A673 (cell line): ENCODE measurements at regions of chr7 and their contacts with region 1.

Region 1: DNA sequence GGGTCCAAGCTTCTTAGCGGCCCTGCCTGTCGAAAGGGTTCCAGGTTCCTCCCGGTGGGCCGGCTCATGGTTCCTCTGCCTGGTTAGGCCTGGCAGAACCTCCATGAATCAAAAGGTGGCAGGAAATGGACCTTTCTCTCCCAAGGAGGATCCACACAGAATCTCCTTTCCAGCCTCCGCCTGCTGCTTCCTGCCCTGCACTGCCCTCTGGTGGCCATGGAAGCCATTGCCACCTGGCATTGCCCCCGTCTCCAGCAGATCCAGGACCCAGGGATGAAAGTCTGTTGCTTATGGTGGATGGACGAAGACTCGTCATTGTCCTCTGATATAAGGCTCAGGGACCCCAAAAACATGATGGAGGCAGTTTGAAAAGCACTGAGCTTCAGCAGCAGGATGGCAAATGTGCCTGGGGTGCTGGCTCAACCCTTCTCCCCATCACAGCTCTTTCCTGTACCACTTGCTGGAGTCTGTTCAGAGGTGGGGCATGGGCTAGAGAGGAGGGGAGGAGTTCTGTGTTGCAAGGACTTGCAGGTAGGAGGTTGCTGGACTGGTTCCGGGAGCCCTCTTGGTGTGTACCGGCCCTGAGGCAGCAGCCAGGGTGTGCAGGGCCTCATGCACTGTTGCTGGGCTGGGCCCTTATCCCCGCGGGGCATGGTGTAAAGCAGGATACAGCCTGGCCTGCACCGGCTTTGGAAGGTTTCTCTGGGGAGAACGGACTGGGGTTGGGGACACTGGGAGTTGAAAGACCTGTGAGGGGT is 11.3 kb upstream of the INMT start:
- DNase-seq: peak; percentile 73
- H3K4me3 ChIP-seq: no peak overlapping the region
- H3K27ac ChIP-seq: no peak overlapping the region
- H3K4me1 ChIP-seq: no peaks in the 10 kb centered on the region
- H3K27me3 ChIP-seq: no peaks in the 10 kb centered on the region
- CTCF ChIP-seq: peak; percentile 97

Region 2: DNA sequence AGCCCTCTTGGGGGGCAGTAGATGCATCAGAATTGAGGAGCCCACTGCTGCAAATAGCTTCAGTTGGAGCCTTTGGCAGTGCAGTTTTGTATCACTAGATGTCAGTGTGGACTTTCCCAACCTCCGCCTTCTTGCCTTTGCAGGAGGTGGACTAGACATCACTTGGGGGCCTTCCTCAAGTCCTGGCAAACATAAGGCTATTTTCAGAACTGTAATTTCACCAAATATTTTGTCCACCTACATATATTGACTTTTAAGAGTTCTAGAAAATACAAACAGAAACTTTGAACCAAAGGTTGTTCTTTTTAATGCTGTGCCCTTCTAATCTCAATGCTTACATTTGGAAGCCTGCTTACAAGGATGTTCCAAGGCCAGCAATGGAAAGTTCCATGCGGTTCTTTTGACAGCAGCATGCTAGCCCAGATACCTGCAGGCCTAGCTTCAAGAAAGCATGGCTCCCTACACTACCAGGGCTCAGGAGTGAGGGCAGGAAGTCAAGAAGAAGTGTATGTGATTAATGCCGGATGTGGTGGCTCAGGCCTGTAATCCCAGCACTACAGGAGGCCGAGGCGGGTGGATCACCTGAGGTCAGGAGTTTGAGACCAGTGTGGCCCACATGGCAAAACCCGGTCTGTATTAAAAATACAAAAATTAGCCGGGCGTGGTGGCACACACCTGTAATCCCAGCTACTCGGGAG is 464.3 kb before region 1 on chr7:
- CTCF ChIA-PET with region 1: interaction called, 5 read pairs
- POLR2A ChIA-PET with region 1: no interaction called
- intact Hi-C with region 1: loop called (anchors 2 kb)
- DNase-seq: peak; percentile 71
- H3K4me3 ChIP-seq: no peak overlapping the region
- H3K27ac ChIP-seq: no peak overlapping the region
- H3K4me1 ChIP-seq: no peaks in the 10 kb centered on the region
- H3K27me3 ChIP-seq: no peaks in the 10 kb centered on the region
- CTCF ChIP-seq: peak; percentile 79

Region 3: GRCh38 chr7:30548762-30549344 is 191.8 kb before region 1 on chr7:
- CTCF ChIA-PET with region 1: no interaction called
- POLR2A ChIA-PET with region 1: no interaction called
- intact Hi-C with region 1: loop called (anchors 5 kb)
- DNase-seq: peak; percentile 85
- H3K4me3 ChIP-seq: no peak overlapping the region
- H3K27ac ChIP-seq: no peak overlapping the region
- H3K4me1 ChIP-seq: peaks cover 26% of the 10 kb centered on the region
- H3K27me3 ChIP-seq: no peaks in the 10 kb centered on the region
- CTCF ChIP-seq: peak; percentile 82

Region 4: DNA sequence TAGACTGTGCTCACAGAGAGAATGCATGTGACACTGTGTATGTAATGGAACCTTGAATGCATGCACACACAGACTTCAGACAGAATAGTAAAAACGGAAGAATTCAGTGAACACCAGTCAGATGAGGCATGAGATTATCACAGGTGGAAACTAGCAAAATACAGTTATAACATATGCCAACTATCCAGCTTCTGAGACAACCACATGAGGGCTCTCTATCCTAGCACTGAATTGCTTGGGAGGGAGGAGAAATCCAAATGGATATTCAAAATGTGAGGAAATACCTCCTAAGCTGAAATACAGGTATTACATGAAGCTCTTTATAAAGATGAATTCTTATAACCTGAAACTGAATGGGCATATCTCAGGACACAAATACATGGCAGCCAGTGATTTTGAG is 115.3 kb before region 1 on chr7:
- CTCF ChIA-PET with region 1: no interaction called
- POLR2A ChIA-PET with region 1: no interaction called
- intact Hi-C with region 1: loop called (anchors 10 kb)
- DNase-seq: no peak
- H3K4me3 ChIP-seq: no peak overlapping the region
- H3K27ac ChIP-seq: no peak overlapping the region
- H3K4me1 ChIP-seq: no peaks in the 10 kb centered on the region
- H3K27me3 ChIP-seq: no peaks in the 10 kb centered on the region
- CTCF ChIP-seq: no peak

Region 5: GRCh38 chr7:30977896-30978564 is 237.4 kb after region 1 on chr7:
- CTCF ChIA-PET with region 1: no interaction called
- POLR2A ChIA-PET with region 1: no interaction called
- intact Hi-C with region 1: loop called (anchors 2 kb)
- DNase-seq: no peak
- H3K4me3 ChIP-seq: no peak overlapping the region
- H3K27ac ChIP-seq: no peak overlapping the region
- H3K4me1 ChIP-seq: no peaks in the 10 kb centered on the region
- H3K27me3 ChIP-seq: peaks cover 5% of the 10 kb centered on the region
- CTCF ChIP-seq: peak; percentile 48